IMR-90 (cell line): ENCODE measurements at regions of chr1 and their contacts with region 1.

Region 1: GRCh38 chr1:56236688-56237087 is 342.7 kb downstream of the PLPP3 start:
- DNase-seq: no peak
- ATAC-seq: no peak
- H3K4me3 ChIP-seq: no peak overlapping the region
- H3K27ac ChIP-seq: no peak overlapping the region
- H3K4me1 ChIP-seq: peaks cover 2% of the 10 kb centered on the region; the same call in 1 of the 2 replicates
- H3K27me3 ChIP-seq: no peaks in the 10 kb centered on the region
- CTCF ChIP-seq: no peak
- POLR2A ChIP-seq: no peak
- RAD21 ChIP-seq: no peak

Region 2: DNA sequence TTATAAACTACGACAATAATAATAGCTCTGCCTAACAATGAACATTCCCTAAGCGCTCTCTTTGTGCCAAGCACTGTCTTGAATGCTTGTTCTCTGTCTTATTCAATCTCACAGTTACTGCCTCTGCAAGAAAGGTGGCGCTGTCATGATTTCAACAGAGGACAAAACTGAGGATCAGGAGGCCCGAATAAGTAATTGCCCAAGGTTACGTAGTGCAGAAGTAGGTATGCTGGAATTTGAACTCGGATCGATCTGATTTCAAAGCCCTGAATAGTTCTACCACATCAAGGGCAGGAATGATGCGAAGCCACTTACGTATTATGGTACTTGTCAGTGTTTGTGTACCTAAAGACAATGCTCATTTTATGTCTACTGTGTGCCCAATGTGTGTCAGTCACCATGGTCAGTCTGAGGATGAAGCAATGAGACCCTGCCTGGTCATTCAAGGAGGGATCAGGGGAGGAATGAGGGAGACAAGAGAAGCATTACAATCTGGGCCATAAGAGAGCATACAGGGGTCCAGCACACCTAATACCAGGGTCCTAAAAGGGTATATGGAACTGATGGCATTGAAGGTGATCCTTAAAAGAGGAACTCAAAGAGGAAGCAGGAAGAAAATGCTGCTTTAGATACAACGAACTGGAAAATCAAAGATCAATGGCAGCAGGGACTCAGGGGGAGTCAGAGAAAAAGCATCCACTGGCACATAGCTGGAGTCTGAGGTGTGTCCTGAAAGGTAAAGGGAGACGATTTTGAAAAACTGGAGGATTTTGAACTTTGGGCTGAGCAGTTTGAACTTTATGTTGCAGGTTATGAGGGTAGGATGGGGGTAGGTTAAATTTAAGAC is 46.5 kb before region 1 on chr1:
- CTCF ChIA-PET with region 1: interaction called, 11 read pairs
- POLR2A ChIA-PET with region 1: no interaction called
- dilution Hi-C with region 1: no loop called
- in situ Hi-C with region 1: no loop called
- intact Hi-C with region 1: no loop called
- DNase-seq: no peak
- ATAC-seq: no peak
- H3K4me3 ChIP-seq: no peak overlapping the region
- H3K27ac ChIP-seq: no peak overlapping the region
- H3K4me1 ChIP-seq: peaks cover 8% of the 10 kb centered on the region
- H3K27me3 ChIP-seq: no peaks in the 10 kb centered on the region; the same call in 1 of the 2 replicates
- CTCF ChIP-seq: 0 out of 2 replicates have a peak, but pooled peaks have one; percentile 8
- POLR2A ChIP-seq: no peak
- RAD21 ChIP-seq: no peak